ENCODE measurements at regions of chr6 and their contacts with region 1.

Region 1: DNA sequence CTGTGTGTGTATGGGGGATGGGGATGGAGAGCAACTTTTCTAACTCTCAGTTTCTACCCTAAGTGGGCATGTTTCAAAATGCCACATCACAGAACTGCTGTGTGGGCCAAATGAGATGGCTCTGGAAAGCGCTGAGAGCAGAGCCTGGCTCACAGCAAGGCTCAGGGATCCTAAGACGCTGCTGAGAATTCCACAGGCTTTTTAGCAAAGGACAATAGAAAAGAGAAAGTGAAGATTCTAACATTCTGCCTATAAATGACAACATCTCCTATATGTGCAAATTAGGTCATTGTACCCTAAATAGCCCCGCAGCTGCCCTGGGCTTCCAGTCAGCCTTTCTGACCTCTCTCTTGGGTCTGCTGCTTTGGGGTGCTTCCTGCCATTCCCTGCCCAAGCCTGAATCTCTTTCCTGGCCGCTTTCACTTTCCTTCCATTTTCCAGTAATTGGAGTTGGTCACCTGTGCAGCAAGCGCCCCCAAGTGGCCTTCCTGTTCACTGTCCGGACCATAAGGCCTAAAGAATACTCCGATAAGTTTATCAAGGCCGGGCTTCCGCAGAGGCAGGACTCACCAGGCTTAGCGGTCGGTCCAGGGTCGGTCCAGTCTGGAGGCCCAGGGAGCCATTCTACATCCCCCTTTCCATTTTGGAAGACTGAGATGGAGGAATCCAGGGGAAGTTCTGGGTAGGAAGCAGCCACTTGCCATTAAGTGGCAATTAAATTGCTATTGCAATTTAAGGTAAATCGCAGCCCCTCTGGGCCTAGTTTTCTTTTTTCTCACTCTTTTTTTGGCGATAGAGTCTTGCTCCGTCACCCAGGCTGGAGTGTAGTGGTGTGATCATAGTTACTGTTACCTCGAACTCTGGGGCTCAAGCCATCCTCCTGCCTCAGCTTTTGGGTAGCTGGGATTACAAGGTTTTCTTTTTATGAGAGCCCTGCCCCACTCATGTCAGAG is 6.6 kb upstream of the DDR1 start:
- DNase-seq: peak; percentile 77
- ATAC-seq: peak; percentile 82
- H3K4me3 ChIP-seq: peak overlapping the region; percentile 26 to 41
- H3K27ac ChIP-seq: peak overlapping the region; percentile 44
- H3K4me1 ChIP-seq: peaks cover 39 to 56% of the 10 kb centered on the region in 2 experiments
- H3K27me3 ChIP-seq: no peaks in the 10 kb centered on the region
- CTCF ChIP-seq: peak in 2 of 3 experiments; percentile 92 to 95; a peak in 4 of 6 replicates
- POLR2A ChIP-seq: no peak
- RAD21 ChIP-seq: no peak

Region 2: GRCh38 chr6:30411515-30412207 is 466.0 kb before region 1 on chr6:
- CTCF ChIA-PET with region 1: no interaction called
- POLR2A ChIA-PET with region 1: no interaction called
- RAD21 ChIA-PET with region 1: no interaction called
- intact Hi-C with region 1: no loop called
- DNase-seq: peak; percentile 61
- ATAC-seq: peak; percentile 97
- H3K4me3 ChIP-seq: no peak overlapping the region; a peak in 1 of 4 replicates
- H3K27ac ChIP-seq: no peak overlapping the region
- H3K4me1 ChIP-seq: peaks cover 0 to 5% of the 10 kb centered on the region in 2 experiments; a peak in 1 of 4 replicates
- H3K27me3 ChIP-seq: no peaks in the 10 kb centered on the region
- CTCF ChIP-seq: peak; percentile 74 to 90 (median 76); a peak in 5 of 6 replicates
- POLR2A ChIP-seq: no peak
- RAD21 ChIP-seq: peak; percentile 67

Region 3: GRCh38 chr6:30578051-30578450 is 299.6 kb before region 1 on chr6:
- CTCF ChIA-PET with region 1: no interaction called
- POLR2A ChIA-PET with region 1: no interaction called
- RAD21 ChIA-PET with region 1: no interaction called
- intact Hi-C with region 1: no loop called
- DNase-seq: no peak
- ATAC-seq: no peak
- H3K4me3 ChIP-seq: no peak overlapping the region
- H3K27ac ChIP-seq: no peak overlapping the region
- H3K4me1 ChIP-seq: peaks cover 0 to 7% of the 10 kb centered on the region in 2 experiments; a peak in 1 of 4 replicates
- H3K27me3 ChIP-seq: no peaks in the 10 kb centered on the region
- CTCF ChIP-seq: no peak
- POLR2A ChIP-seq: no peak
- RAD21 ChIP-seq: no peak

Region 4: DNA sequence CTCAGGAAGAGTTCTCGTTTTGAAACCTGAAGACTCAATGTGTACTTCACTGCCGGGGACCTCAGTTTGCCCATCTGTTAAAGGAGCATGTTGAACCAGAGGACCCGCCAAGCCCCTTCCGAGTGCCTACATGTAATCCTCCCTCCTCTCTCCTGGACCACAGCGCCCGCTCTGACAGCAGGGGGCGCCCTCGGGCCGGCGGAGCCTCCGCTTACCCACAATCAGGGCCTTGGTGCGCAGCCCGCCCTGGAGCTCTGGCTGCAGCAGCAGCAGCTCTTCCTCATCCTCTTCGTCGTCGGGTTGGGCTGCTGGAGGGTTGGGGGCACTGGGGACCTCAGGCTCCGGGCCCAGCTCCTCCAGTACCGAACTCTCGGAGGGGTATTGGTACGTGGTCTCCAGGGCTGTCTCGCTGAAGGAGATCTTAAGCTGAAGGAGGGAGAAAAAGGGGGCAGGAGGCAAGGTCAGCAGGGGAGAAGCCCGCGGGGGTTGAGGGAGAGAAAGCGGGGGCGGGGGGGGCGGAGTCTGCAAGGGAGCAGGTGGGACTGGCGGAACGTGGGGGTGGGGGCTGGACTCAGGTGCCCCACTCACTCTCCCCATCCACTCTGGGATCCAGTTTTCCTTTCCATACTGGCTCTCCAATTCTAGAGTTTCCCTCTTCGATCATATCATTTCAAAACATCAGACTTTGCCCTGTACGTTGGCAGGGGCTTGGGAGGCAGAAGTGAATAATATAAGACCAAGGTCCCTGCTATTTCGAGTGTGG is 198.6 kb before region 1 on chr6:
- CTCF ChIA-PET with region 1: no interaction called
- POLR2A ChIA-PET with region 1: no interaction called
- RAD21 ChIA-PET with region 1: no interaction called
- intact Hi-C with region 1: loop called (anchors 1 kb)
- DNase-seq: no peak
- ATAC-seq: peak; percentile 85
- H3K4me3 ChIP-seq: no peak overlapping the region
- H3K27ac ChIP-seq: 0 out of 2 replicates have a peak overlapping the region, but pooled peaks have one; percentile 8
- H3K4me1 ChIP-seq: peaks cover 22 to 34% of the 10 kb centered on the region in 2 experiments
- H3K27me3 ChIP-seq: no peaks in the 10 kb centered on the region
- CTCF ChIP-seq: peak in 2 of 3 experiments; percentile 96; a peak in 4 of 6 replicates
- POLR2A ChIP-seq: no peak
- RAD21 ChIP-seq: no peak

Region 5: DNA sequence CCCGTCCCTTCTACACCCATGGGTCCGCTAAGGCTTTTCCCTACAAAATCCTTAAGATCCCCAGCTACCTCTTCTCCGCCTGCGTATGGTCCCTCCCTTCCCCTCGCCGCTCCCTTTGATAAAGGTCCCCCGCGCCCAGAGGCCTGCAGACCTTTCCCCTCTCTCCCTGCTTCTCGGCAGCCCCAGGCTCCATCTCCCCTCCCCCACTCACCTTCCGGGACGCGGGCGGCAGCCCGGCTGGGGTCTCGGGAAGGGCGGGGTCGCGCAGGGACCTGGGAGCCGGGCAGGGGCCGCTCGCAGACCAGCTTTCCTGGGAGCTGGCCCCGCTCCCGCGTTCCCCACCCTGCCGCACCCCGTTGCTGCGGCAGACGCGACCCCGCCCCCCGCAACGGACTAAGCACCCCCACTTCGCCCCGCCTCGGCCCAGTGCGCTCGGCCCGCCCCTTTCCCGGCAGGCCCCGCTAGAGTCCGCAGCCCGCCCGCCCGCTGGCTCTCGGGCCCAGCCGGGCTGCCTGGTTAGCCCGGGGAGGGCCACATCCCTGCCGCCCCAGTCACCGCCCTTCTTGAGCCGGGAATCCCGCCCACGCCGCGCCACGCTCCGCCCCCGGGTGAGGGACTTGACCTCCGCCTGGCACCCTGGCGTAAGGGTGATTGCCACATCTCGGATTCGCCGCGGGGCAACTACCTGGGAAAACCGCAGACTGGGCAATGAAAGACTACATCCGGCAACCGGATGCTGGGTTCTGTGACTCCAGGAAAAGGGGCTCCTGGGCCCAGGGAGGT is 135.2 kb before region 1 on chr6 and contains the start of gene FLOT1:
- CTCF ChIA-PET with region 1: no interaction called
- POLR2A ChIA-PET with region 1: interaction called, 5 read pairs
- RAD21 ChIA-PET with region 1: no interaction called
- intact Hi-C with region 1: loop called (anchors 1 kb)
- DNase-seq: peak; percentile 94
- ATAC-seq: peak; percentile 70
- H3K4me3 ChIP-seq: peak within 1 kb of the TSS; percentile 79 to 85
- H3K27ac ChIP-seq: peak within 1 kb of the TSS; percentile 93
- H3K4me1 ChIP-seq: peaks cover 37 to 79% of the 10 kb centered on the region in 2 experiments
- H3K27me3 ChIP-seq: no peaks in the 10 kb centered on the region
- CTCF ChIP-seq: no peak
- POLR2A ChIP-seq: peak; percentile 98
- RAD21 ChIP-seq: no peak
- total RNA-seq, gene FLOT1: 117 TPM

Region 6: DNA sequence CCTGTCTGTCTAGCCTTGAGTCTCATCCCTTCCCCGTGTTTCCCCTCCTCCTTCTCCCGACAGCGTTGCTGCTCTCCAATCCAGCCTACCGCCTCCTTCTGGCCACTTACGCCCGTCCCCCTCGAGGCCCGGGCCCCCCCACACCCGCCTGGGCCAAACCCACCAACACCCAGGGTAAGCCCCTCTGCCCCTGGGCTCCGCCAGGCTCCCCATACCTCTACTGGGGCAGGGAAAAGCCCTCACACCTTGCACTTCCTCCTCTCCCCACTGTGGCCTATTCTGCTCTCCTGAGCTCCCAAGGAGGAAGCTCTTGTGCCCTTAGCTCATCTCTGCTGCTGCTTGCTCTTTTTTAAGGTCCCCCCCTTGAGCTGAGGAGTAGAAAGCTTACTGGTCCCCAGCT is 17.6 kb after region 1 on chr6:
- CTCF ChIA-PET with region 1: no interaction called
- POLR2A ChIA-PET with region 1: no interaction called
- RAD21 ChIA-PET with region 1: no interaction called
- intact Hi-C with region 1: no loop called
- DNase-seq: no peak
- ATAC-seq: no peak
- H3K4me3 ChIP-seq: no peak overlapping the region
- H3K27ac ChIP-seq: no peak overlapping the region
- H3K4me1 ChIP-seq: no peaks in the 10 kb centered on the region
- H3K27me3 ChIP-seq: no peaks in the 10 kb centered on the region
- CTCF ChIP-seq: no peak
- POLR2A ChIP-seq: no peak
- RAD21 ChIP-seq: no peak